ENCODE measurements at regions of chr3 and their contacts with region 1.

Region 1: DNA sequence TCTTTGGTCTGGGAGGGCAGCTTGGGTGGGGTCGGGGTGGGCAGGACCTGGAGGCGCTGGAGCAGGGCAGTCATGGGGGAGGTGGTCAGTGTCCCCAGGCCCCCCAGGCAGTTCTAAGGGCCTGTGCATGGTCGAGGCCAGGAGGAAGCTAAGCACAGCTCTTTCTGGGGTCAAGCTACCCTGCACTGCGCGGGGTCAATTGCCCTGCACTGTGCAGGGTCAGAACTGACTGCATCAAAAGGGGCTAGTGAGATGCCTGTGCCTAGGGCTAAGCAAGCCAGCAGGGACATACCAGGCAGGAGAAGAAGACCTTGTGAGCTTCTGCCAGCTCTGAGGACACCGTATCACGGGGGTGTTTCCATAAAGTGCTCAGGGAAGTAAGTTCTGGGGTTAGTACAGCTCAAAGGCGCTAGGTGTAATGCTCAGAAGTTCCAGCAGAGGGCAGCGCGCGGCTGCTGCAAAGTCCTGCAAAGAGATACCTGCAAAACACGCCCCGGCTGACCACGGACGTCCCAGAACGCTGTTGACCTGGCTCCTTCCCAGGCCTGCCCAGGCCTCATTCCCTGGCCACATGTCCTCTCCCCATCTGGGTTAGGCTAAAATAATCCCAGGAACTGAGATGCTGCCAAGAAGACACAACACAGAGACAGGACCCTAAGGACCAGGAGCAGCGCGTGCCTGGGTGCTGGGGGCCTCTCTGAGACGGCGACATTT is 18.8 kb upstream of the IQSEC1 start:
- DNase-seq: peak; percentile 88 to 93 (median 93)
- ATAC-seq: peak; percentile 92 to 96 (median 96)
- H3K4me3 ChIP-seq: no peak overlapping the region
- H3K27ac ChIP-seq: no peak overlapping the region
- H3K4me1 ChIP-seq: peaks cover 0 to 12% (median 0%) of the 10 kb centered on the region in 4 donors
- H3K27me3 ChIP-seq: no peaks in the 10 kb centered on the region
- CTCF ChIP-seq: peak; percentile 92 to 97 (median 94)
- POLR2A ChIP-seq: no peak

Region 2: GRCh38 chr3:13455644-13456043 is 363.6 kb after region 1 on chr3:
- intact Hi-C with region 1: loop called (anchors 5 kb)
- DNase-seq: no peak
- ATAC-seq: no peak
- H3K4me3 ChIP-seq: no peak overlapping the region
- H3K27ac ChIP-seq: no peak overlapping the region
- H3K4me1 ChIP-seq: peaks cover 0 to 3% (median 0%) of the 10 kb centered on the region in 4 donors
- H3K27me3 ChIP-seq: no peaks in the 10 kb centered on the region
- CTCF ChIP-seq: no peak
- POLR2A ChIP-seq: no peak

Measured in right lobe of liver (tissue), 6 donors.